Activated naive CD4-positive, alpha-beta T cell treated with anti-CD3 and anti-CD28 coated beads for 36 hours (primary cell): ENCODE measurements at regions of chr9 and their contacts with region 1.

Region 1: DNA sequence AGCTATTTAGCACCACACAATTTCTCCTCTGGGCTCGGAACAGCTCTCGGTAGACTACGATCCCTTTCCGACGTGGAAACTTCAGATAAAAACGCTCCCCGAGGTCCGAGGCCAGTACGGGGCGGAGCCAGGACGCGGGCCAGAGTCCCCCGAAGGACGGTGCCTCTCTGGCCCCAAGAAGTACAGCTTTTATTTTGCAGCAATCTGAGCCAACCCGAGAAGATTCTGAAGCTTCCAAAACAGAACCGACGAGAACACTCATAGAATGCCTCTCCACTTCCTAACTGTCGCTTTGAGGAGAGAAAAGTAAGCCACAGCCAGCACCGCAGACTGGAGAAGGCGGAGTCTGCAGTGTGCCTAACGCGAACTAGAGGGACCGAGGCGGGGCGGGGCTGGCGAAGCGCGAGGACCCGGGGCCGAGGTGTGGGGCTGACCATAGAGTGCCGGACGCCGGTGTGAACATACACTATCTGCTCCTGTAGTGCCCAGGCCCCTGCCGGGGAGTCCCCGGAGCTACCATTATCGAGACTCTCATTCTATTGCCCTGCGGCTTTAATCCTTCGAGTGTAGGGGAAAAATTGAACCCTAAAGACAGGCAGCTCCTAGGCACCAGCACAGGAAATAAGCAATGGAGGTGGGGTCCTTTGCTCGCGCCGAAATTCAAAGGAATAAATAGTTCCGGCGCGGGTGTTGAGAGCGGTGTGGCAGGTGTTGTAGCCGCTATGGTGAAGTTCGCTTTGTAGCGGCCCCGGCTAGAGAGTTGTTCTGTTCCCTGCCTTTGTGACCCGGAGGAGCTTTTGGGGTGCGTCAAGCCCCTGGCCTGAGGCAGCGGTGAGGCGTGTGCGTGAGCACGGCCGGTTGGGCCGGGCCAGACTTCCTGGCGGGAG is at the start of gene SMC2:
- DNase-seq: peak; percentile 93
- H3K4me3 Mint-ChIP-seq: peak within 1 kb of the TSS; percentile 99
- H3K27ac Mint-ChIP-seq: peak within 1 kb of the TSS; percentile 95
- H3K4me1 Mint-ChIP-seq: peaks cover 35% of the 10 kb centered on the region
- H3K27me3 Mint-ChIP-seq: no peaks in the 10 kb centered on the region
- total RNA-seq, gene SMC2: 62.0 to 63.8 TPM

Region 2: DNA sequence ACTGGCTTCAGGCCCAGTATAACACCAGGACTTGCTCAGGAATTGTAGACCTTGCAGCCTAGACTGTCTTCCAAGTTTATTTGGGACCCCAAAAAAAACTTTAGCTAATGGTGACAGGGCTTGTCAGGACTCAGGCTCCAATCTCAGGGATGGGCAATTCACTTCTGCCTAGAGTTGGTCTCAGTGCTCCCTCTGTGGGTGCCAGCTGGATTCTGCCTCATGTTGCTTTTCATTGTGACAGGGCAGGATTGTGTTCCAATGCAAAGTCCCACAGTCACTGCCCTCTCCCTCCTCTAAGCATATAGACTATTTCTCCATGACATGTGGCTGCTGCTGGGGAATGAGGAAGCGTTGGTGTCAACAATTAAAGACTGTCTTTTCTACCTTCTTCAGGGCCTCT is 924.1 kb before region 1 on chr9:
- CTCF ChIA-PET with region 1: no interaction called
- intact Hi-C with region 1: no loop called
- DNase-seq: no peak
- H3K4me3 Mint-ChIP-seq: no peak overlapping the region
- H3K27ac Mint-ChIP-seq: no peak overlapping the region
- H3K4me1 Mint-ChIP-seq: no peaks in the 10 kb centered on the region
- H3K27me3 Mint-ChIP-seq: no peaks in the 10 kb centered on the region

Region 3: DNA sequence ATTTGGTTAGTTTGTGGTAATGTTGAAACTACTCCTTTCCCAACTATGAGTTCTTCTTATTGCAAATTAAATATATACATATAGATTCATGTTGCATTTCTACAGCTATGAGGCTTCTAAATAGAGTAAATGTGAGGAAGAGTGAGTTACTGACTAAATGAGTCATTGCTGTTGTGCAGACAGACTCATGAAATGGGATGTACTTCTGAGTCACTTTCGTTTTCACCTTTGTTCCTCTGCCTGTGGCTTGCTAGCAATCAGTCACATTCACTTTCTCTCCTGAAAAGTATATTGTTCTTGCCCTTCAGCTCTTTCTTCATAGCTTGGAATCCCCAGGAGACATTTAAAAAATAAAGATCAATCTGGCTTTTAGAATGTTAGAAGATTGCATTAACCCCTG is 295.3 kb before region 1 on chr9:
- CTCF ChIA-PET with region 1: no interaction called
- intact Hi-C with region 1: loop called (anchors 1 kb)
- DNase-seq: peak; percentile 9
- H3K4me3 Mint-ChIP-seq: no peak overlapping the region
- H3K27ac Mint-ChIP-seq: no peak overlapping the region
- H3K4me1 Mint-ChIP-seq: peaks cover 6% of the 10 kb centered on the region
- H3K27me3 Mint-ChIP-seq: peaks cover 7% of the 10 kb centered on the region

Region 4: GRCh38 chr9:103991698-103992097 is 102.2 kb before region 1 on chr9:
- CTCF ChIA-PET with region 1: no interaction called
- intact Hi-C with region 1: loop called (anchors 1 kb)
- DNase-seq: peak; percentile 13
- H3K4me3 Mint-ChIP-seq: no peak overlapping the region
- H3K27ac Mint-ChIP-seq: no peak overlapping the region
- H3K4me1 Mint-ChIP-seq: peaks cover 2% of the 10 kb centered on the region
- H3K27me3 Mint-ChIP-seq: peaks cover 2% of the 10 kb centered on the region

Region 5: DNA sequence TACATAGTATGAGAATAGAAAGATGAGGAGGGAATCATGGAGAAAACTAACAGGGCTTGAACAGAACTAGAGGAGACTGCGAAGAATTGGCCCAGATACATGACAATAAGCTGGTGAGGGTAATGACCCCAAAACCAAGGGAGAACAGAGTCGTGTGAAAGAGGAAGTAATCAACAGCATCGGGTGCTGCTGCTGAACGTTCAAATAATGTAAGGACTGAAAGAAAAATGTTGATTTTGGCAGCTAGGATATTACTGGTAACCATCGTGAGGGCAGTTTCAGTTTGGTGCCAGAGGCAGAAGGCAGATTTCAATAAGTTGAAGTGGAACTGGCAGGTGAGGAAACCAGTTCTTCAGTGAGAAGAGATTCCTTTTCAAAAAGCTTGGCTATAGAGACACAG is 66.6 kb before region 1 on chr9:
- CTCF ChIA-PET with region 1: no interaction called
- intact Hi-C with region 1: loop called (anchors 2 kb)
- DNase-seq: no peak
- H3K4me3 Mint-ChIP-seq: no peak overlapping the region
- H3K27ac Mint-ChIP-seq: no peak overlapping the region
- H3K4me1 Mint-ChIP-seq: peaks cover 19% of the 10 kb centered on the region
- H3K27me3 Mint-ChIP-seq: peaks cover 7% of the 10 kb centered on the region

Region 6: DNA sequence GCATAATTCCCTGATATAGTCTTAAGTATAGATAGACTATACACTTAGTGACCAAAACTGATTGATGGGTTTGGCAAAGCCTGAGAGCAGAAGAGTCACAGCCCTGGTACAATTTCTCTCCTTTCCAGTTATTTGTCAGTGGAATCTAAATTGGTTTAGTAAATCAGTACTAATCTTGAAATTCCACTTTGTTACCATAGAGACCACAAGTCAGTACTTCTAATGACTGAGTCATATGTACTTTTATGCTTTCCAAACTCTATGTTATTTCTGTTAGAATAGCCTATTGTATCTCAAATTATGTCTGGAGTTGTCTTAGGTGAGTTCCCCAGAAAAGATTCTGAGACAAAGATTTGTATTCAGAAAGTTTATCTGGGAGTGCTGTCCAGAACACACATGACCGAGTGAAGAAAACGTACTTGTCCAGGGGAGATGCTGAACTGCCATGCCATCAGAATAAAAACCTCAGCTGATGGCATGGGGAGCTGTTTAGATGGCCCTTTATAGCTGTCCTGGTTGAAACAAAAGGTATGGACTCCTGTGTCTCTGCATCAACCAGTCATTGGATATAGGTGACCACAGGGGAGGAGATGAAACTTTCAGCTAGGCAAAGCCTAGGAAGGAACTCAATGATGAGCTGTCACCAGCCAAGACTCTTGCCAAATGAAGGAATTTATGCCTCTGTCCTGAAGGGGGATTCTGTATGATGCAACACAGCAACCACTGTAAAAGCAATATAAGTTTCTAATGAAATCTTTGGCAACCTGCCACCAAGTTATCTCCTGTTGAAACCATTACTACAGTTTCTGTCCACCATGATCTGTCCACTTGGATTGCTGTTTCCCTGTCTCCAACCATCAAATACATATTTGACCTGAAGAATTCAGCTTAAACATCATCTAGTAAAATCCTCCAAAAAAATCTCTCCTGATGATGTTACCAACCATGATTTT is 17.8 kb before region 1 on chr9:
- CTCF ChIA-PET with region 1: no interaction called
- intact Hi-C with region 1: no loop called
- DNase-seq: no peak
- H3K4me3 Mint-ChIP-seq: no peak overlapping the region
- H3K27ac Mint-ChIP-seq: no peak overlapping the region
- H3K4me1 Mint-ChIP-seq: peaks cover 2% of the 10 kb centered on the region
- H3K27me3 Mint-ChIP-seq: peaks cover 36% of the 10 kb centered on the region

Region 7: DNA sequence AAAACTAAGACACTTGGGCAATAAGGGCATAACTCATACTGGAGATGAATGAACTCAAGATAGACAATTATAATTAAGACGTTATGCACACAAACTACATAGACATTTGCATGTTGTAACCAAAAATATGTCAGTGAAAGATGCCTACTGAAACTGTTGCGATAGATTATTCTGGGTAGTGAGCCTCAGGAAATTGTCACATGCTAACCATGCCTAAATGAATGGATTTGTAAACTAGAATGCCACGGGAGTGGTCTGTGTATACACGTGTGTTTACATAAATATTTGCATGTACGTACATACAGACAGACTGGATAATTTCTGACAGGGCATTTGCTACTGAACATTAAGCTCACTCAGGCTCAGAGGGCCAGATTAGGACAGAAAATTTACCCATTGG is 671.2 kb after region 1 on chr9:
- CTCF ChIA-PET with region 1: no interaction called
- intact Hi-C with region 1: loop called (anchors 5 kb)
- DNase-seq: no peak
- H3K4me3 Mint-ChIP-seq: peak overlapping the region; percentile 82
- H3K27ac Mint-ChIP-seq: no peak overlapping the region
- H3K4me1 Mint-ChIP-seq: peaks cover 6% of the 10 kb centered on the region
- H3K27me3 Mint-ChIP-seq: no peaks in the 10 kb centered on the region

Region 8: GRCh38 chr9:105557771-105558610 is 1464.1 kb after region 1 on chr9 and contains the start of gene FKTN:
- CTCF ChIA-PET with region 1: no interaction called
- intact Hi-C with region 1: loop called (anchors 5 kb)
- DNase-seq: peak; percentile 88
- H3K4me3 Mint-ChIP-seq: peak within 1 kb of the TSS; percentile 85
- H3K27ac Mint-ChIP-seq: peak within 1 kb of the TSS; percentile 77
- H3K4me1 Mint-ChIP-seq: peaks cover 16% of the 10 kb centered on the region
- H3K27me3 Mint-ChIP-seq: no peaks in the 10 kb centered on the region
- total RNA-seq, gene FKTN: 8.0 to 9.6 TPM